ENCODE measurements at regions of chr10 and their contacts with region 1.

Region 1: DNA sequence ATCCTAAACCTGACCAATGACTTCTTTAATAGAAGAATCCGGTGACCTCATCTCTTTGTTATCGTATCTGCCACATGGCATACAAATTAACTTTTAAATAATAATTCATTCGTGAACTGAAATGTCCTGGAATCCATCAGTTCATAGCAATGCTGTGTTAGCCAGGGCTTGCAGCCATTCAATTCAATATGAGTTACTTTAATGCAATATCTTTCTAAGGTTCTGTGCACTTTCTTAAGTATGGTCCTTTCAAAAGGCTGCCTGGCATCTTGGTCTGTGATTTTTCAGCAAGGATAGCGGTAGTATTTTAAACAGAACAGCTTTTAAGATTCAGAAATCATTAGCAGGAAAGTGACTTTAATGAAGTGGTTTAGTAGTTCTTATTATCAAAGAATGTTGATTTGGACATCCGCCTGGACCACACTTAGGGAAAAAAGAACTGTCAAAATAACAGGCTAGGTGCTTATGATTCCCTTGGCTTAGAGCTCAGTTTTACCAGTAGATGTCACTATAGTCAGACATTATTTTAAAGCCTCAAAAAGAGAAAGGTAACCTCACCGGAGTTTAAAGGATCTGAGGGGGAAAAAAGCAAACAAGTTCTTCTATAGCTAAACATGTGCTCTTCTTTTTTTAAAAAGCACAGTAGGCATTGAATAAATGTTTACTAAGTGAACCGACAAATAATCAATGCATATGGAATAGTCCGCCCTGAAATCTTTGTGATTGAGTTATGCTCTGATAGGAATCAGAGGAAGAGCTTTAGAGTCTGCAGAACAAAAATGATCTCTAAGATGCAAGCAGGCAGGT is 22.7 kb downstream of the SLC35G1 start:
- DNase-seq: no peak
- ATAC-seq: peak in 6 of 8 donors; percentile 33 to 79 (median 70)
- H3K4me3 ChIP-seq: peak overlapping the region in 4 of 10 donors; percentile 9 to 34 (median 16)
- H3K27ac ChIP-seq: no peak overlapping the region
- H3K4me1 ChIP-seq: peaks cover 0 to 20% (median 9%) of the 10 kb centered on the region in 9 donors
- H3K27me3 ChIP-seq: no peaks in the 10 kb centered on the region
- CTCF ChIP-seq: peak; percentile 14 to 72 (median 54)

Region 2: DNA sequence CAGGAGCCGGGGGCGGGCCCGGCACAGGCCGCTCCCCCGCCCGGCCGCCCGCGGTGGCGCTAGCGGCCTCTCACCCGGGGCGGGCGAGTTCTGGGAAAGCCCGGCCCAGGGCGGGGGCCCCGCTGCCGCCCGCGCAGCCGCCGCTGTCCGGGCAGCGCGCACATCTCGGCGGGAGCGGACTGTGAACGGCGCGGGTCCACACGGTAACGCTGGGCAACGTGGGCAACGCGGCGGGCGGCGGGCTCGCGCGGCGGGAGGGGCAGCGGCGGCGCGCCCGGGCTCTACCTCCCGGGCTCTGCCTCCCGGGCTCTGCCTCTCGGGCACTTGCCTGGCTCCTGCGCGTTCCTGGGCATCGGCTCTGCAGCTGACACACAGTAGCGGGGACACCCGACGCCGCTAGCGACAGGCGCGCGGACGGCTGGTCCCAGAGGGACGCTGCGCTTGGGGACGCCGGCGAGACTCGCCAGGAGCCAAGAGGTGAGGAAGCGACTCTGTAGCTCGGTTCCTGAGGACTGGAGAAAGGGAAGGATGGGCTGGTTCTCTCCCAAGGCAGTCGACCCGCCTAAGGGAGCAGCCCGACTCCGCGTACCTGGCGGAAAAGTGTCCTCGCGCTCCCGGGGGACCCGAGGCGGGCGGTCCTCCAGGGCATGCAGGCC is 77.5 kb after region 1 on chr10 and contains the start of gene PLCE1:
- intact Hi-C with region 1: loop called in 1 of 10 experiments (anchors 5 kb)
- DNase-seq: peak; percentile 46 to 48
- ATAC-seq: peak; percentile 63 to 91 (median 78)
- H3K4me3 ChIP-seq: peak within 1 kb of the TSS; percentile 35 to 80 (median 62)
- H3K27ac ChIP-seq: peak within 1 kb of the TSS in 8 of 10 donors; percentile 19 to 86 (median 69)
- H3K4me1 ChIP-seq: peaks cover 0 to 53% (median 21%) of the 10 kb centered on the region in 9 donors
- H3K27me3 ChIP-seq: peaks cover 0 to 55% (median 0%) of the 10 kb centered on the region in 7 donors
- CTCF ChIP-seq: no peak
- total RNA-seq, gene PLCE1: 1.7 to 62.0 (median 13.8) TPM

Region 3: GRCh38 chr10:94315024-94315451 is 398.6 kb after region 1 on chr10:
- intact Hi-C with region 1: loop called (anchors 1 to 10 kb)
- DNase-seq: no peak
- ATAC-seq: peak in 3 of 8 donors; percentile 12 to 34 (median 20)
- H3K4me3 ChIP-seq: no peak overlapping the region
- H3K27ac ChIP-seq: peak overlapping the region in 4 of 10 donors; percentile 15 to 35 (median 24)
- H3K4me1 ChIP-seq: peaks cover 0 to 24% (median 0%) of the 10 kb centered on the region in 9 donors
- H3K27me3 ChIP-seq: no peaks in the 10 kb centered on the region
- CTCF ChIP-seq: no peak

Region 4: GRCh38 chr10:94362360-94363250 is 446.1 kb after region 1 on chr10 and contains the start of gene NOC3L:
- intact Hi-C with region 1: loop called in 1 of 10 experiments (anchors 5 kb)
- DNase-seq: peak; percentile 93 to 96
- ATAC-seq: peak; percentile 99 to 100 (median 100)
- H3K4me3 ChIP-seq: peak within 1 kb of the TSS; percentile 39 to 84 (median 74)
- H3K27ac ChIP-seq: peak within 1 kb of the TSS in 9 of 10 donors; percentile 48 to 84 (median 72)
- H3K4me1 ChIP-seq: peaks cover 6 to 27% (median 15%) of the 10 kb centered on the region in 9 donors
- H3K27me3 ChIP-seq: peaks cover 0 to 4% (median 0%) of the 10 kb centered on the region in 7 donors
- CTCF ChIP-seq: peak; percentile 74 to 97 (median 92)
- total RNA-seq, gene NOC3L: 7.1 to 9.3 (median 8.0) TPM

Region 5: GRCh38 chr10:95214793-95215192 is 1298.3 kb after region 1 on chr10:
- intact Hi-C with region 1: loop called in 1 of 10 experiments (anchors 5 kb)
- DNase-seq: no peak
- ATAC-seq: no peak
- H3K4me3 ChIP-seq: no peak overlapping the region
- H3K27ac ChIP-seq: no peak overlapping the region
- H3K4me1 ChIP-seq: peaks cover 0 to 3% (median 0%) of the 10 kb centered on the region in 9 donors
- H3K27me3 ChIP-seq: no peaks in the 10 kb centered on the region
- CTCF ChIP-seq: no peak

Measured in heart right ventricle (tissue), 16 donors.